Calu3 (cell line): ENCODE measurements at regions of chr5 and their contacts with region 1.

Region 1: DNA sequence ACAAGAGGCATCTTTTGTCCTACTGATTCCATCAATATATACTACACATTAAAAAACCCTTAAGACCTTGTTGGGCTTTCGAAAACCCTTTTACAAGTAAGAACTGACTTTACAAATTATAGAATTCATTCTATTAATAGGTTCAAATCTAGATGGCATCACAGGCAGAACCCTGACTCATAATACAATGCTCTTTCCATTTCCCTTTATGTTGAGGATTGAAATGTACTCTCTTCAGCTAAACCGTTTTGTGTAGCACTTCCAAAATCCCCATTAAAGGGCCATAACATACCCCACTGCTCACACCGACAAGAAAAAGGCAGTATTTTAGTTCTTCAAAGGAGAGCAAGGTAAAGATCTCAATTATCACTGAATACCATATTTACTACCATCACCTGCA is 11.2 kb downstream of the CSNK1A1 start:
- DNase-seq: no peak
- H3K4me3 Mint-ChIP-seq: no peak overlapping the region
- H3K27ac Mint-ChIP-seq: no peak overlapping the region
- H3K4me1 Mint-ChIP-seq: peaks cover 27% of the 10 kb centered on the region
- H3K27me3 Mint-ChIP-seq: no peaks in the 10 kb centered on the region
- CTCF ChIP-seq: no peak

Region 2: GRCh38 chr5:149448831-149449714 is 91.0 kb before region 1 on chr5:
- CTCF ChIA-PET with region 1: no interaction called
- intact Hi-C with region 1: no loop called
- DNase-seq: no peak
- H3K4me3 Mint-ChIP-seq: no peak overlapping the region
- H3K27ac Mint-ChIP-seq: no peak overlapping the region
- H3K4me1 Mint-ChIP-seq: peaks cover 53% of the 10 kb centered on the region
- H3K27me3 Mint-ChIP-seq: no peaks in the 10 kb centered on the region
- CTCF ChIP-seq: peak; percentile 32

Region 3: DNA sequence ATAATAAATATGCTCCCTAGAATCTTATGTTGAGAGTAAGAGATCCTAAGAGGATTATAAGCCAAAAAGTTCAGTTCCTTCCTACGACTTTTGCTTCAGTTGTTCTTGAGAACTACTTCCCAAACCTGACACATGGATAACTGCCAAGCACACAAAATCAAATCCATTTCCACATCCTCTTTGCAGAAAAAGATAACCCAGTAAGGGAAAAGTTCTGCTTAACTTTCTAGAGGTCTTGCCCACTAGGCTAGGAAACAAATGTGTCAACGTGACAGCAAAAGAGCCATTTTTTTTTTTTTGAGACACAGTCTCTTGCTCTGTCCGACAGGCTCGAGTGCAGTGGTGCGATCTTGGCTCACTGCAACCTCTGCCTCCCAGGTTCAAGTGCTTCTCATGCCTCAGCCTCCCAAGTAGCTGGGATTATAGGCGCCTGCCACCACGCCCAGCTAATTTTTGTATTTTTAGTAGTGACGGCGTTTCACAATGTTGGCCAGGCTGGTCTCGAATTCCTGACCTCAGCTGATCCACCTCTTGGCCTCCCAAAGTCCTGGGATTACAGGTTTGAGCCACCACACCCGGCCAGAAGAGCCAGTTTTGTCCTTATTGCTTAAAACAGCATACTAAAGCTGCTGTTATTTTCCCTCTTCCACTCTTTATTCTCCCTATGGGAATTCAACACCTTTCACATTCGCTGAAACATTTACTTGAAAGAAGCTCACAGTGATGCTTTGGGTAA is 13.1 kb before region 1 on chr5:
- CTCF ChIA-PET with region 1: interaction called, 5 read pairs
- intact Hi-C with region 1: loop called (anchors 2 kb)
- DNase-seq: no peak
- H3K4me3 Mint-ChIP-seq: peak overlapping the region; percentile 42
- H3K27ac Mint-ChIP-seq: peak overlapping the region; percentile 60
- H3K4me1 Mint-ChIP-seq: peaks cover 67% of the 10 kb centered on the region
- H3K27me3 Mint-ChIP-seq: no peaks in the 10 kb centered on the region
- CTCF ChIP-seq: no peak